Breast epithelium (tissue), 4 donors: ENCODE measurements at regions of chr5 and their contacts with region 1.

Region 1: GRCh38 chr5:139293504-139294373 is at the start of gene MATR3:
- DNase-seq: peak; percentile 95 to 98
- H3K4me3 ChIP-seq: peak within 1 kb of the TSS; percentile 86 to 99 (median 91)
- H3K27ac ChIP-seq: peak within 1 kb of the TSS; percentile 100
- H3K4me1 ChIP-seq: peaks cover 0 to 17% of the 10 kb centered on the region in 2 donors
- H3K27me3 ChIP-seq: no peaks in the 10 kb centered on the region
- CTCF ChIP-seq: no peak
- POLR2A ChIP-seq: peak; percentile 99
- total RNA-seq, gene MATR3: 213 to 349 (median 279) TPM

Region 2: DNA sequence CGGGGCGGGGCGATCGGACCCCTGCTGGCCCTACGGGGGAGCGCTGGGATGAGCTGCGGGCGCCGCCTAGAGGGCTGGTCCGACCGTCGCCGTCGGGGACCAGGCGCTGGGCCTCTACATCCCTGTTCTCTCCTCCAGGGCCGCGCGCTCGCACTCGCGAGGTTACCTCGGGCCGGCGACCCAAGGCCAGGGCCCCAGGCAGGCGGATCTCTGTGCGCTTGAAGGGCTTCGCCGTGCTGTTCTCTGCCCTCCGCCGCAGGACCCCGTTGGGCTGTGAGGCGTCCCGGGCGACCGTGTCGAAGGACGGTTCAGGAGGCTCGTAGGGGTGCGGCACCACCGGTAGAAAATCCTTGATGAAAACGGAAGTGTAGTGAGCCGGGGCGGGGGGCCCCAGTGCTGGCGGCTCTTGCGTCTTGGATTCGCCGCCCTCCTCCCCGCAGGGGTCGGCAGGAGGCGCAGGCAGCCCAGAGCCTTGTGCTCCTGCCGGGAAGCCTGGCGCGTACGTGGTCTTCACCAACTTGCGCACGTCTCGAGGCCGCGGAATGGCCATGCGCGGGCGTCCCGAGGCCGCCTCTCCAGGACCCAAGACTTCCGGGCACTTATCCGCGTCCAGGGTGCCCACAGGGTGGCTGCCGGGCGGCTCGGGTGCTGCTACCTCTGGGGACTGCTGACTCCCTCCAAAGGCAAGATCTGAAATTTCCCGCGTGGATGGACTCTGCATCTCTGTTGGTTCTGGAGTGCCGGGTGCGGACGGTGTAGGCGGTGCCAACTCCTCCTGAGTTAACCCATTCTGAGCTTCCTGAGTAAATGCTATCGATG is 99.1 kb after region 1 on chr5:
- intact Hi-C with region 1: loop called (anchors 10 kb)
- DNase-seq: no peak
- H3K4me3 ChIP-seq: peak overlapping the region; percentile 37 to 68 (median 53)
- H3K27ac ChIP-seq: peak overlapping the region; percentile 45 to 88
- H3K4me1 ChIP-seq: peaks cover 3 to 16% of the 10 kb centered on the region in 2 donors
- H3K27me3 ChIP-seq: peaks cover 0 to 3% of the 10 kb centered on the region in 2 donors
- CTCF ChIP-seq: peak in 2 of 3 donors; percentile 40 to 46
- POLR2A ChIP-seq: no peak

Region 3: GRCh38 chr5:139611703-139612584 is 318.2 kb after region 1 on chr5:
- intact Hi-C with region 1: no loop called
- DNase-seq: no peak
- H3K4me3 ChIP-seq: no peak overlapping the region
- H3K27ac ChIP-seq: peak overlapping the region in 1 of 2 donors; percentile 21
- H3K4me1 ChIP-seq: no peaks in the 10 kb centered on the region
- H3K27me3 ChIP-seq: no peaks in the 10 kb centered on the region
- CTCF ChIP-seq: no peak
- POLR2A ChIP-seq: no peak

Region 4: GRCh38 chr5:140025736-140026135 is 732.0 kb after region 1 on chr5:
- intact Hi-C with region 1: no loop called
- DNase-seq: no peak
- H3K4me3 ChIP-seq: no peak overlapping the region
- H3K27ac ChIP-seq: no peak overlapping the region
- H3K4me1 ChIP-seq: peaks cover 0 to 4% of the 10 kb centered on the region in 2 donors
- H3K27me3 ChIP-seq: no peaks in the 10 kb centered on the region
- CTCF ChIP-seq: no peak
- POLR2A ChIP-seq: no peak

Region 5: DNA sequence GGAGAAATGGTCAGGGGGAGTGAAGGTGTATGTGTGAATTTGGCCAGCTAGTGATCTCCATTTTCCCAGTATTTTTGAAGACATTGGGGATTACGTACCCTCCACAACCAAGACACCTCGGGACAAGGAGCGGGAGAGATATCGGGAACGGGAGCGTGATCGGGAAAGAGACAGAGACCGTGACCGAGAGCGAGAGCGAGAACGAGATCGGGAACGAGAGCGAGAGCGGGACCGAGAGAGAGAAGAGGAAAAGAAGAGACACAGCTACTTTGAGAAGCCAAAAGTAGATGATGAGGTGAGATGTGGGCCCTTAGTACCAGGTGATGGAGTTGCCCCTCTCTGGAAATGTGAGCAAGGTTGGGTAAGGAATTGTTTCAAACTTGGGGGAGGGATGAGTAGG is 1365.1 kb after region 1 on chr5:
- intact Hi-C with region 1: loop called (anchors 5 kb)
- DNase-seq: no peak
- H3K4me3 ChIP-seq: no peak overlapping the region
- H3K27ac ChIP-seq: no peak overlapping the region
- H3K4me1 ChIP-seq: no peaks in the 10 kb centered on the region
- H3K27me3 ChIP-seq: no peaks in the 10 kb centered on the region
- CTCF ChIP-seq: no peak
- POLR2A ChIP-seq: no peak